ENCODE measurements at regions of chr10 and their contacts with region 1.

Region 1: DNA sequence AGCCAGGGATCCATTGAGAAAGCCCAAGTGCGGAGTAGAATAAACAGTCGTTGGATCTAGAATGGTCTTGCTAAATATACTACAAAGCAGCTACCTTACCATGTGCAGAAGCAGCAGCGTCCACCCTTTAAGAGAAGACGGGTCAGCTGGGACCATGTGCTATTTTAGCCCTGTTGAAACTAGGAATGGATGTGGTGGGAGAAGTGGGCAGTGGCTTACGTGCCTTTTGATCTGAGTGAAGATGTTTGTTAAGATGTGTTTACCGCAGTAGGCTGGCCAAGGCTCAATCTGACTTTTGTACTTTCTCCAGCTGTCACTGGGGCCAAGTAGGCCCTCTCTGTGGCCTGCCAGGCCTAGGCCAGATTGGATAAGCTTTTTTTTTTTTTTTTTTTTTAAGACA is 9.2 kb downstream of the HABP2 start:
- DNase-seq: no peak
- ATAC-seq: no peak
- H3K4me3 ChIP-seq: no peak overlapping the region
- H3K4me3 Mint-ChIP-seq: no peak overlapping the region
- H3K27ac ChIP-seq: no peak overlapping the region
- H3K27ac Mint-ChIP-seq: no peak overlapping the region
- H3K4me1 ChIP-seq: peaks cover 0 to 8% of the 10 kb centered on the region in 2 experiments
- H3K4me1 Mint-ChIP-seq: peaks cover 6 to 10% (median 10%) of the 10 kb centered on the region in 3 donors
- H3K27me3 ChIP-seq: peaks cover 0 to 16% of the 10 kb centered on the region in 2 experiments
- H3K27me3 Mint-ChIP-seq: peaks cover 8 to 18% of the 10 kb centered on the region in 2 donors

Region 2: DNA sequence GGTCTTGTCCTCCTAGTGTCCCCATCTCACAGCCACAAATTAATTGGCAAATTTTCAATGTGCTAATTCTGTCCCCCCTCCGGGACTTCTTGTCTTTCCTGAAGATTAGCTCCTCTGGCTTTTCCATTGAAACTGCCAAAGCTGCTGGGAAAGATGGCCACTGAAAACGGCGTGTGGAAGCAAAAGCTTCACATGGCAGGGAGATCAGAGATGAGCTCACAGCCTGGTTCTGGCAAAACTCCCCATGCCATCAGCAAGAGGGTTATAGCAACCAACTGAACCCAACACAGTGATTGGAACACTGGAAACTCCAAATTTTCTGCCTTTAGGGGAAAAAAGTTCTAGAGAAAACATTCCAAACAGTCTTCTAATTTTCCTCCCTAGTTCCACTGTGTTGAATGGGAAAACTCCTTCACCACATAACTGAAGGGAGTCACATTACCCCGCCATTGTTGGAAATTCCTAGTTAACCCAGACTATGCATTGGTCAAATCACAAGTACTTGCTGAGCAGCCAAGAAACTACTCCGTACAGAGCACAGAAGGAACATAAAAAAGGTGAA is 64.8 kb after region 1 on chr10:
- CTCF ChIA-PET with region 1: interaction called in 1 of 2 experiments, 10 read pairs
- POLR2A ChIA-PET with region 1: no interaction called
- DNase-seq: no peak
- ATAC-seq: no peak
- H3K4me3 ChIP-seq: no peak overlapping the region
- H3K4me3 Mint-ChIP-seq: no peak overlapping the region
- H3K27ac ChIP-seq: no peak overlapping the region
- H3K27ac Mint-ChIP-seq: no peak overlapping the region
- H3K4me1 ChIP-seq: no peaks in the 10 kb centered on the region
- H3K4me1 Mint-ChIP-seq: no peaks in the 10 kb centered on the region
- H3K27me3 ChIP-seq: peaks cover 0 to 10% of the 10 kb centered on the region in 2 experiments
- H3K27me3 Mint-ChIP-seq: peaks cover 11 to 31% of the 10 kb centered on the region in 2 donors

Region 3: GRCh38 chr10:114043532-114044246 is 481.6 kb after region 1 on chr10 and contains the start of gene ADRB1:
- CTCF ChIA-PET with region 1: no interaction called
- POLR2A ChIA-PET with region 1: no interaction called
- DNase-seq: peak in 17 of 35 experiments; percentile 1 to 51 (median 20)
- ATAC-seq: peak; percentile 30 to 72 (median 42)
- H3K4me3 ChIP-seq: peak within 1 kb of the TSS; percentile 34 to 77
- H3K4me3 Mint-ChIP-seq: peak within 1 kb of the TSS; percentile 70 to 80 (median 73)
- H3K27ac ChIP-seq: no peak within 1 kb of the TSS
- H3K27ac Mint-ChIP-seq: peak within 1 kb of the TSS in 1 of 2 donors; percentile 71
- H3K4me1 ChIP-seq: peaks cover 11 to 27% of the 10 kb centered on the region in 2 experiments
- H3K4me1 Mint-ChIP-seq: peaks cover 13 to 22% (median 15%) of the 10 kb centered on the region in 3 donors
- H3K27me3 ChIP-seq: peaks cover 12 to 28% of the 10 kb centered on the region in 2 experiments
- H3K27me3 Mint-ChIP-seq: peaks cover 62 to 63% of the 10 kb centered on the region in 2 donors
- total RNA-seq, gene ADRB1: 0.09 to 0.90 (median 0.30) TPM